Mammary epithelial cell (primary cell): ENCODE measurements at regions of chr6 and their contacts with region 1.

Region 1: DNA sequence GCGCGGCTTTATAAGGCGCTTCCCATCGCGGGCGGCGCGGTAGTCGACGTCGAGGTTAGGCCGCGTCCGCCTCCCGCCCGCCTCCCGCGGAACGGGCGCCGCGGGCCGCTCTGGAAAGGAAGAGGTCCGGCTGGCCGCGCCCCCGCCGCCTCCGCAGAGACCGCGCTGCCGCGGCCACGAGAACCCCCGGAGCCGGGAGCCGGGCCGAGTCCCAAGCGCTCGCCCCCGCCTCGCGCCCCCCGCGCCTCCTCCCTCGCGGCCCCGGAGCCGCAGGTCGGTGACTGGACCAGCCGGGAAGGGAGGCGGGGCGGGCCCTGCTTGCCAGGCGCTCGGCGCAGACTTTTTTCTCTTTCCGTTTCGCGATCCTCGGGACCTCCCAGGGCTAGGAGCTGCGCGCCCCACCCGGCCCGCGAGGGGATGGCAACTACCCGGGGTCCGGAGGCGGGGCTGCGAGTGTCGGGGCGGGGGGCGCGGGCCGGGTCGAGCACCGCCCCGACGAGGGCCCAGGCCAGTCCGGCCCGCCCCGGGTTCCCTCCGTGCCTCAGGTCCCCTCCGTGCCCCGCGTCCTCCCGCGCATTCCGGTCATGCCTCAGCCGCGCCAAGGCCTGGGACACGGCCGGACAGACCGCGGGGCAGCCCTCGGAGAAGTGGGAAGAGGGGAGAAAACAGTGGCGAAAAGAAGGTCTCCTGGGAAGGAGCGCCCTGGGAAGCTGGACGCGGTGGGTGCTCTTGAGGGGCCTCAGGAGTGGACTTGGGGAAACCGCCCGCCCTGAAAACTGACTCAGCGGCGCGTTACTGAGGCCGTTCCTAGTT is 423 bp upstream of the PXDC1 start:
- DNase-seq: peak; percentile 78
- H3K4me3 ChIP-seq: peak overlapping the region; percentile 75 to 94 (median 93)
- H3K27ac ChIP-seq: peak overlapping the region; percentile 64
- H3K4me1 ChIP-seq: peaks cover 30% of the 10 kb centered on the region
- H3K27me3 ChIP-seq: no peaks in the 10 kb centered on the region
- CTCF ChIP-seq: no peak

Region 2: DNA sequence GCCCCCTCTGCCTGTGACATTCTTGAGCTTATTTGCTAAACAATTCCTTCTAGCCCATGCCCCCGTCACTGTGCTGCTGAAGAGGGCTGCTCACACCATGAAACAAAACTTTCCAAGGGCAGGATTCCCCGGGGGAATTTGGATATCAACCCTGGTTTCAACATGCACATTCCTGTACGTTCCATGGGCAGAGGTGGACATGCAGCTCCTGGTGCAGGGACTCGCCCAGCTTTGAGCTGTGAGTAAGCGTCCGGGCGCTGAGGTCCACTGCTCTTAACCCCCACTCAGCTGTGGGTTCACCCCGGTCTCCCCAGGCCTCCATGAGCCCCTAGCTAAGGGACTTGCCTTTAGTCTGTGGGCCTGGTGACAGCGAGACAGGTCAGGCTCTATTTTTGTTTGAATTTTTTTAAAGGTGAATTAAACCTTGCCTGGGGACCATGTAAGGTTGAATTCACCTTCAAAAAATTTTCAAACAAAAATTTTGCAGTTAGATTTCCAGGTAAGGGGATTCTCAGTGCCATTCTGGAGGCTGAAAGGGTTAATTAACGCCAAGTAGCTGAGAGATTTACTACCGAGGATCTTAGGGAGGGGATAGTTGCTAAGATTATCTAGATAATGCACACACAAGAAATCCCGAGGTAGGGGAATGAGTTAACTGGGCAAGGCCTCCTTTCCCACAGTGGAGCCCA is 224.8 kb before region 1 on chr6:
- CTCF ChIA-PET with region 1: no interaction called
- dilution Hi-C with region 1: no loop called
- in situ Hi-C with region 1: no loop called
- intact Hi-C with region 1: no loop called
- DNase-seq: peak; percentile 96
- H3K4me3 ChIP-seq: no peak overlapping the region
- H3K27ac ChIP-seq: peak overlapping the region; percentile 78
- H3K4me1 ChIP-seq: peaks cover 51% of the 10 kb centered on the region
- H3K27me3 ChIP-seq: no peaks in the 10 kb centered on the region
- CTCF ChIP-seq: no peak

Region 3: GRCh38 chr6:3808759-3809514 is 57.0 kb after region 1 on chr6:
- CTCF ChIA-PET with region 1: no interaction called
- dilution Hi-C with region 1: no loop called
- in situ Hi-C with region 1: no loop called
- intact Hi-C with region 1: loop called (anchors 1 kb)
- DNase-seq: peak; percentile 90
- H3K4me3 ChIP-seq: no peak overlapping the region
- H3K27ac ChIP-seq: peak overlapping the region; percentile 72
- H3K4me1 ChIP-seq: peaks cover 49% of the 10 kb centered on the region
- H3K27me3 ChIP-seq: no peaks in the 10 kb centered on the region
- CTCF ChIP-seq: peak in 1 of 2 donors; percentile 2

Region 4: GRCh38 chr6:3848925-3849605 is 97.1 kb after region 1 on chr6 and contains the start of gene FAM50B:
- CTCF ChIA-PET with region 1: interaction called, 3 read pairs
- dilution Hi-C with region 1: no loop called
- in situ Hi-C with region 1: no loop called
- intact Hi-C with region 1: loop called (anchors 1 kb)
- DNase-seq: peak; percentile 81
- H3K4me3 ChIP-seq: peak within 1 kb of the TSS; percentile 44 to 62 (median 59)
- H3K27ac ChIP-seq: peak within 1 kb of the TSS; percentile 87
- H3K4me1 ChIP-seq: peaks cover 12% of the 10 kb centered on the region
- H3K27me3 ChIP-seq: no peaks in the 10 kb centered on the region
- CTCF ChIP-seq: peak; percentile 48 to 91
- total RNA-seq, gene FAM50B: 4.4 to 7.3 TPM

Region 5: DNA sequence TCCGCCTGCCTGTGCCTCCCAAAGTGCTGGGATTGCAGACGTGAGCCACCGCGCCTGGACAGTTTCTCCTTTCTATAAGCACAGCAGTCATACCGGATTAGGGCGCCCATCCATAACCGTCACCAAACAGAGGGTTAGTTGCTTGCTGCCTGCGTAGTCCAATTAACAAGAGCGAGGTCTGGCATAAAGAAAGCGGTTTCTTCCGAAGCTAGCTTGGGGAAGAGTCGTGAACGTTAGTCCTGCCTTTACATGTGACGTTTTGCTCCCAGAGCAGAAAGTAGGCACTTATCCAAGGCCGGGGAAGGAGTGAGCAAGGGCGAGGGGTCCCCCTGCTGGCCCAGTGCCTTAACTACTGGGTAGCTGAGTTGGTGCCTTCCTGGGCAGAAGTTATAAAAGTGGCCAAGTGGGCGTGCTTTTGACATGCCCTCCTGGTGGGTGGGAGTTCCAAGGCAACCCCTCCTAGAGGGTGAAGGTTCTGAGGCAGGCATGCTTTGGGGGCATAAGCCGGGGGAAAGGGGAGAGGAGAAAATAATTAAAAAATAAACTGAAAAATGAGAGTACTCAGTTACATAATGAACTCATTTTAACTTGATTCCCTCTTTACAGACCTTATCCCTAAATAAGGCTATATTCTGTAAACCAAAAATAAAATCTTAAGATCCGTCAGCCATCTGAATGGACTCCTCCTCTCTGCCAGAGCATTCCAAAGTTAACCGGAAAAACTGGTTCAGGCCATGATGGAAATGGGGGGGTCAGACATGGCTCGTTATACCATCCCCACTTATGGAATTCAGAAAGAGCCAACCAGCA is 239.0 kb after region 1 on chr6:
- CTCF ChIA-PET with region 1: no interaction called
- dilution Hi-C with region 1: no loop called
- in situ Hi-C with region 1: no loop called
- intact Hi-C with region 1: loop called (anchors 1 kb)
- DNase-seq: peak; percentile 77
- H3K4me3 ChIP-seq: peak overlapping the region; percentile 27 to 42 (median 41)
- H3K27ac ChIP-seq: peak overlapping the region; percentile 42
- H3K4me1 ChIP-seq: peaks cover 13% of the 10 kb centered on the region
- H3K27me3 ChIP-seq: no peaks in the 10 kb centered on the region
- CTCF ChIP-seq: peak; percentile 90 to 97